WTC11 (cell line): ENCODE measurements at regions of chr1 and their contacts with region 1.

Region 1: GRCh38 chr1:201436393-201436792 is 14.9 kb upstream of the TNNI1 start:
- DNase-seq: peak; percentile 72
- ATAC-seq: peak; percentile 97
- H3K4me3 Mint-ChIP-seq: no peak overlapping the region; the same call in 1 of the 2 replicates
- H3K27ac Mint-ChIP-seq: no peak overlapping the region; the same call in 1 of the 2 replicates
- H3K4me1 Mint-ChIP-seq: peaks cover 19% of the 10 kb centered on the region
- H3K27me3 Mint-ChIP-seq: no peaks in the 10 kb centered on the region; the same call in 1 of the 2 replicates
- CTCF ChIP-seq: no peak

Region 2: DNA sequence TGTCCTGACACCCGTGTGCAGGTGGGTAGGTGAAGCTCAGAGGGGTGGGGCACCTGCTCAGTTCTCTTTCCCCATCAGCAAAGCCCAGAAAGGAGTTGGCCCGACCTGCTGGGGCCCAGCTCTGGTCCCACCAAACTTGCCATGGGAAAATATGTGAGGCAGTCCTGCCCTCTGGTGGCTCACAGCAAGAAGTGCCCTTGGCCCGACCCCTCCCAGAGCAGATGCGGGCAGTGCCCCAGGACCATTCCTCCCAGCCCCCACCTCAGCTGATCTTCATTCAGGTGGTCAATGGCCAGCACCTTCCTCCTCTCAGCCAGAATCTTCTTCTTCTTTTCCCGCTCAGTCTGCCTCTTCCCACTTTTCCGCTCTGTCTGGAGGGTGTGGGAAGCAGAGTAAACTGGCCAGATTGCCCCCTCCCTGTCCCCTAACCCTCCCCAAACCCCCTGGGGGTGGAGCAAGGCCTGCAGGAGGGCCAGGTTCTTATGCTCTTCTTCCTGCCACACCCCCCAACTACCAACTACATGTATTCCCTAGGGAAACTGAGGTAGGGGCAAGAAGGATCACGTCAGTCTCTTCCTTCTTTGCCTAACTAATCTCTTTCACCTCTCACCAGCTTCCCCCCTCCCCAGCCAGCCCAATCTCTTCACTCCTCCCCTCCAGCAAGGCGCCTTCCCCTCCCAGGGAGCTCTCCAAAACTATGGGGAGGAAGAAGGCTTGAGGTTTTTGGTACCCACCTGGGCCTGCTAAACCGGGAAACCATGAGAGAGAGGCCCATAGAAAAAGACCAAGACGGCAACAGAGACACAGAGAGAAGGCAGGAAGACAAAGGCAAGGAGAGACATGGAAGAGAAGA is 74.5 kb before region 1 on chr1:
- CTCF ChIA-PET with region 1: interaction called, 14 read pairs
- POLR2A ChIA-PET with region 1: no interaction called
- DNase-seq: peak; percentile 85
- ATAC-seq: peak; percentile 89
- H3K4me3 Mint-ChIP-seq: no peak overlapping the region
- H3K27ac Mint-ChIP-seq: no peak overlapping the region
- H3K4me1 Mint-ChIP-seq: peaks cover 18% of the 10 kb centered on the region
- H3K27me3 Mint-ChIP-seq: peaks cover 3% of the 10 kb centered on the region; the same call in 1 of the 2 replicates
- CTCF ChIP-seq: peak; percentile 90

Region 3: GRCh38 chr1:201408176-201408833 is 28.1 kb before region 1 on chr1:
- CTCF ChIA-PET with region 1: interaction called, 31 read pairs
- POLR2A ChIA-PET with region 1: no interaction called
- DNase-seq: peak; percentile 94
- ATAC-seq: peak; percentile 95
- H3K4me3 Mint-ChIP-seq: no peak overlapping the region
- H3K27ac Mint-ChIP-seq: no peak overlapping the region
- H3K4me1 Mint-ChIP-seq: peaks cover 2% of the 10 kb centered on the region; the same call in 1 of the 2 replicates
- H3K27me3 Mint-ChIP-seq: no peaks in the 10 kb centered on the region; the same call in 1 of the 2 replicates
- CTCF ChIP-seq: peak; percentile 97

Region 4: DNA sequence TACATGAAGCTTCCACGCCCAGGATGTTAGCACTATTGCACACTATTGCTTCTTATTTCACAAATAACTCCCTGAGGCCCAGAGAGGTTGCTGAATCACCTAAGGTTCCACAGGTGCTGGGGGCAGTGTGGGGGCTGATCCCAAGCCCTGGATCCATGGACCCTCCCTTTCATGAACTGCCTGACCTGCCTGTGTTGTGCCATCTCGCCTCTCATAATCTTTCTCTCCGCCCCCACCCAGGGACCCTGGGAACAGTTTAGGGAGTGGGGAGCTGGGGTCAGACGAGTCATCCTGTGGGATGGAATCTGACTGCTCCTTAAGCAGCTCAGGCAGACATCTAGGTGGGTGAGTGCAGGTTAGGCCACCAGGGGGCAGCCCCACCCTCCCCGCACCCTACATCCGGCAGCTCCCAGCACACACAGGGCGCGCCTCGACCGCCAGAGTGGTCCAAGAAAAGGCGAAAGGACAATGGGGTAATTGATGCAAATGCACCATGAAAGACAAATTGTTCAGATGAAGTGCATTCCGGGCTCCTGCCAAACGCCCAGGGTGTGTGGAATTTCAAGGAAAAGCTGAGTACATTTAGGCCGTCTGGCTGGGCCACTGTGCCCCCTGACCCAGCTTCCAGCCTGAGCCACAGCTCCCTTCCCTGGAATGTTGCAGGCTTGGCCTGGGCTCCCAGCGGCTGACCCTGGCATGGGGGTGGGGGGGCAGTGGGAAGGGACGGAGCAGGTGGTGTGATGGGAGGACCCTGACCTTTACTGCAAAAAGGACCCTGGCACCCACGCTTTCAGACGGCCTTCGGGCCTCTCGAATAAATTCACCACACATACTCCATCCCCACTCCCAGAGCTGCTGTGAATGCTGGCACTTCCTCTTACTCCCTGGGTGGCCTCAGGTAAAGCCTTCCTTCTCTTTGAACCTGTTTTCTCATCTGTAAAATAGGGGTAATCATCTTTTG is 11.8 kb after region 1 on chr1:
- CTCF ChIA-PET with region 1: interaction called, 126 read pairs
- POLR2A ChIA-PET with region 1: interaction called, 4 read pairs
- DNase-seq: peak; percentile 83
- ATAC-seq: peak; percentile 89
- H3K4me3 Mint-ChIP-seq: no peak overlapping the region
- H3K27ac Mint-ChIP-seq: no peak overlapping the region
- H3K4me1 Mint-ChIP-seq: peaks cover 35% of the 10 kb centered on the region
- H3K27me3 Mint-ChIP-seq: peaks cover 3% of the 10 kb centered on the region; the same call in 1 of the 2 replicates
- CTCF ChIP-seq: peak; percentile 80

Region 5: GRCh38 chr1:201468844-201469511 is 32.6 kb after region 1 on chr1 and contains the start of gene PHLDA3:
- CTCF ChIA-PET with region 1: interaction called, 27 read pairs
- POLR2A ChIA-PET with region 1: interaction called, 3 read pairs
- DNase-seq: peak; percentile 85
- ATAC-seq: peak; percentile 68
- H3K4me3 Mint-ChIP-seq: peak within 1 kb of the TSS; percentile 90
- H3K27ac Mint-ChIP-seq: no peak within 1 kb of the TSS; the same call in 1 of the 2 replicates
- H3K4me1 Mint-ChIP-seq: peaks cover 30% of the 10 kb centered on the region
- H3K27me3 Mint-ChIP-seq: peaks cover 40% of the 10 kb centered on the region
- CTCF ChIP-seq: no peak
- total RNA-seq, gene PHLDA3: 53.9 to 95.1 TPM (median 59.7 TPM) in 3 replicates

Region 6: GRCh38 chr1:201904579-201904978 is 468.2 kb after region 1 on chr1:
- CTCF ChIA-PET with region 1: no interaction called
- POLR2A ChIA-PET with region 1: no interaction called
- DNase-seq: no peak
- ATAC-seq: peak; percentile 80
- H3K4me3 Mint-ChIP-seq: no peak overlapping the region
- H3K27ac Mint-ChIP-seq: 0 out of 2 replicates have a peak overlapping the region, but pooled peaks have one; percentile 48
- H3K4me1 Mint-ChIP-seq: no peaks in the 10 kb centered on the region
- H3K27me3 Mint-ChIP-seq: no peaks in the 10 kb centered on the region; the same call in 1 of the 2 replicates
- CTCF ChIP-seq: no peak